ENCODE measurements at regions of chr16 and their contacts with region 1.

Region 1: DNA sequence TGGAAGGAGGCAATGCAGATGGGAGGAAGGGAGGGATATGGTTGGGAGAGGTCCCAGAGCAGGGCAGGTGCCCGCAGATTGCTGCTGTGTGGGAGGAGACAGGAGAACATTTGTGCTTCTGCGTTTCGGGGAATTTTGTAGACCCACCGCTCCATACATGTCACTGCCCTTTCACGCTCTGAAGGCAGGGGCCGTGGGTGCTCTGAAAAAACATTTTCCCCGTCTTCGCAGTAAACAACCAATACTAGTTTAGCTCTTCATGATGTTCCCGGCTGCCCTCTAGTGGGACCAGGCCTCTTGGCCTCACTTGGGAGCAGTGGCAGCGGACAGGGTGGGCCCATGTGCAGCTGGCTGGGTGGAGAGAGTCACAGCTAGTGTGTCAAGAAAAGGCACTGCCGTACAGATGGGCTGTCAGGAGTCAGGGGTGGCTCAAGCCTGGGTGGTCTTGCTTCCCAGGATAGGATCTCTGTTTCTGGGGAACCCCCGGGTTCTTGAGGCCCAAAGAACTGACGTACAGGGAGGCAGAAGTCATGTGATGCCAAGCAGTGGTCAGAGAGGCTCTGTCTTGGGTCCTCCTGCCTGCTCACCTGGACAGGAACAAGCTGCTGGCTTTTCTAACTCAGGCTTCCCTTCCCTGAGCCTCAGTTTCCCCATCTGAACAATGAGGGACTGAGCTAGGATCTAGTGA is 46.5 kb upstream of the CPNE2 start:
- DNase-seq: peak; percentile 57
- ATAC-seq: peak; percentile 25
- H3K4me3 Mint-ChIP-seq: peak overlapping the region; percentile 68
- H3K27ac Mint-ChIP-seq: peak overlapping the region; percentile 92
- H3K4me1 Mint-ChIP-seq: peaks cover 87% of the 10 kb centered on the region
- H3K27me3 Mint-ChIP-seq: no peaks in the 10 kb centered on the region
- CTCF ChIP-seq: no peak

Region 2: GRCh38 chr16:56425439-56425832 is 620.4 kb before region 1 on chr16 and contains the start of gene AMFR:
- CTCF ChIA-PET with region 1: no interaction called
- POLR2A ChIA-PET with region 1: no interaction called
- intact Hi-C with region 1: loop called (anchors 5 kb)
- DNase-seq: peak; percentile 82
- ATAC-seq: peak; percentile 87
- H3K4me3 Mint-ChIP-seq: peak within 1 kb of the TSS; percentile 96
- H3K27ac Mint-ChIP-seq: peak within 1 kb of the TSS; percentile 95
- H3K4me1 Mint-ChIP-seq: peaks cover 44% of the 10 kb centered on the region
- H3K27me3 Mint-ChIP-seq: no peaks in the 10 kb centered on the region
- CTCF ChIP-seq: no peak
- total RNA-seq, gene AMFR: 118 and 134 TPM in 2 replicates

Region 3: GRCh38 chr16:56931892-56932720 is 113.7 kb before region 1 on chr16 and contains the start of gene HERPUD1:
- CTCF ChIA-PET with region 1: no interaction called
- POLR2A ChIA-PET with region 1: interaction called, 18 read pairs
- intact Hi-C with region 1: loop called (anchors 1 kb)
- DNase-seq: peak; percentile 98
- ATAC-seq: peak; percentile 79
- H3K4me3 Mint-ChIP-seq: peak within 1 kb of the TSS; percentile 97
- H3K27ac Mint-ChIP-seq: peak within 1 kb of the TSS; percentile 95
- H3K4me1 Mint-ChIP-seq: peaks cover 61% of the 10 kb centered on the region
- H3K27me3 Mint-ChIP-seq: no peaks in the 10 kb centered on the region
- CTCF ChIP-seq: no peak
- total RNA-seq, gene HERPUD1: 766 and 820 TPM in 2 replicates

Region 4: DNA sequence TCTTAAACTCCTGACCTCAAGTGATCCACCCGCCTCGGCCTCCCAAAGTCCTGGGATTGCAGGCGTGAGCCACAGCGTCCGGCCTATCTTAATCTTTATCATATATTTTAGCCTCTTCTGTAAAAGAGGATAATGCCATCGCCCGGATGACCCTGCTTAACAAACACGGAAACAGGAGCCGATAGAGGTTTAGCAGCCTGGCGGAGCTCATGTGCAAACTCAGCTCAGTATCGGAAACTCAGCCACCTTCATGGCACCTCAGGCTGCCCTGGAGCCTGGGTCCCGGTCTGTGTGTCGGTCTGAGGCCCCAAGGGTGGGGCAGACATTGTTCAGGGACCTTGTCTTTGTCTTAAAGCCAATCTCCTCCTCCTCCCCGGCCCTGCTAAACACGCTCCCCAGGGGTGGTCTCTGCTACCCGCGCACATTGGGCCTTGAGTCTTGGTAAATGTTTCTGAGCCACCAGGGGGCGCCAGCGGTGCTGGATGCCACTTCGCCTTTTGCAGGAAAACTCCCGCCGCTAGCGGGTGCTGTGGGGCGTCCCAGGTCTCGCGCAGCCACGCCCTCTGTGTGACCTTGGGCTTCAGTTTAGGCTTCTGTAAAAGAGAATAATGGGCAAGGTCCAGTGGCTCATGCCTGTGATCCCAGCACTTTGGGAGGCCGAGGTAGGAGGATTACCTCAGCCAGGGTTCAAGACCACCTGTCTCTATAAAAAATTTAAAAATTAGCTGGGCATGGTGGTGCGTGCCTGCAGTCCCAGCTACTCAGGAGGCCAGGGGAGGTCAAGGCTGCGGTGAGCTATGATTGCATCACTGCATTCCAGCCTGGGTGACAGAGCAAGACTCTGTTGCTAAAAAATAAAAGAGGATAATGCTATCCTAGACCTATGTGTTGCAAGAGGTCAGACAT is 81.3 kb before region 1 on chr16:
- CTCF ChIA-PET with region 1: interaction called, 108 read pairs
- POLR2A ChIA-PET with region 1: interaction called, 87 read pairs
- intact Hi-C with region 1: loop called (anchors 1 kb)
- DNase-seq: peak; percentile 93
- ATAC-seq: peak; percentile 94
- H3K4me3 Mint-ChIP-seq: no peak overlapping the region
- H3K27ac Mint-ChIP-seq: peak overlapping the region; percentile 84
- H3K4me1 Mint-ChIP-seq: peaks cover 25% of the 10 kb centered on the region
- H3K27me3 Mint-ChIP-seq: no peaks in the 10 kb centered on the region
- CTCF ChIP-seq: peak; percentile 97

Region 5: DNA sequence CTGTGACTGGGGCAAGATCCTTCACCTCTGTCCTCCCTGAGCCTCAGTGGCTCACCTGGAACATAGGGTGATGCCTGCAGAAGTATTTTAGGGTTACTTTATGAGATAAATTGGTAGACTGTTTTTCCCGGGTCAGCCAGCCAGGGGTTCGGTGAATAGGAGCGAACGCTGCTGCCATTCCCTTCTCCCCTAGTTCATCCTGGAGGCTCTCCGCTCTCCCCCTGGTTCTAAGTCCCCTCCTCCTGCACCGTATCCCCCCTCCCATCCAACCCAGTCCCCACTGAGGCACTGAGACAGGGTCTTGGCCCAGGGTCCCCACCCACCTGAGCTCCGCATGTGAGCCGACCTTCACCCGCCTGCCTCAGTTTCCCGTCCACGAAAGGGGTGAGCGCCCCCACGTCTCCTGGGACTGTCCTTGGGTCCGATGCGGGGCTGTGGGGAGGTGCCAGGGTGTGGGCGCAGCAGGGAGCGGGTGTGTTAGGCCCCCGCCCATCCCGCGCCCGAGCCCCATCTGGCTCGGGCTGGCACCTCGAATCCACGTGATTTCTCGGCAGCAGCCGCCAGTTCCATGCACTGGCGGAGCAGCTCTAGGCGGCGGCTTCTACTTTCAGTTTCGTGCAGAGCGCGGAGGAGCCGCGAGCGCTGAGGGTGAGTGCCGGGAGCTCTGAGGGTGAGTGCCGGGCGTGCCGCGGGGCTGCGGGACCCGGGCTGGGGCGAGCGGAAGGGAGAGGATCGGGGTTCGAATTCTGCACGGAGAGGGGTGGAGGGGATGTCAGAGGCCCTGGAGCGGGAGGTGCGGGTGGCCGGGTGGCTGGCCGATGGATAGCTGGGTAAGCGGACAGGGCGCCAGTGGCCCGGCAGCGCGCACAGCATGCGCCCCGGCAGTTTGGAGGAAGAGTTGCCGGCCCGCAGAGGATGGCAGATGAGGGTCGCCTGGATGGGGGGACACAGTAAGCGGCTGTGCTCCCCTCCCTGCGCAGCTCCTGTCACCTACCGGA is 56.6 kb before region 1 on chr16 and contains the start of gene NLRC5:
- CTCF ChIA-PET with region 1: interaction called, 10 read pairs
- POLR2A ChIA-PET with region 1: interaction called, 73 read pairs
- intact Hi-C with region 1: no loop called
- DNase-seq: peak; percentile 76
- ATAC-seq: peak; percentile 89
- H3K4me3 Mint-ChIP-seq: peak within 1 kb of the TSS; percentile 96
- H3K27ac Mint-ChIP-seq: peak within 1 kb of the TSS; percentile 93
- H3K4me1 Mint-ChIP-seq: peaks cover 86% of the 10 kb centered on the region
- H3K27me3 Mint-ChIP-seq: no peaks in the 10 kb centered on the region
- CTCF ChIP-seq: no peak
- total RNA-seq, gene NLRC5: 296 and 372 TPM in 2 replicates

Region 6: DNA sequence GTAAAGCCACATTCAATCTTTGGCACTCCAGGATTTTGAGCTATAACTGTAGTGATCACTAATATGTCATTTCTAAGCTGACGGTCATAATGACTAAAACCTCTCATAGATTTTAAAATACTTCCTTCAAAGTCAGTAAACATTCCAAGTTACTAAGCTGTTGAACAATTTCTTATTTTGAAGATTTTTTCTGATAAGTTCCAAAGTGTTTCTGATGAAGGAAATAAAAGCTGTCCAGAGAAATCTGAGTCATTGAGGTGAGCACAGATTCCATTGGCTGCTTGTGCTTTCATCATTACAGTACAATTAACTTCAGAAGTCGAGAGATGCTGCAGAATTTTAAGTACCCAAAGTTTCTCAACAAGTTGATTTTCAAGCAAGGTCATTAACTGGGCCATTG is 32.6 kb before region 1 on chr16:
- CTCF ChIA-PET with region 1: interaction called, 5 read pairs
- POLR2A ChIA-PET with region 1: interaction called, 18 read pairs
- intact Hi-C with region 1: loop called (anchors 1 kb)
- DNase-seq: no peak
- ATAC-seq: no peak
- H3K4me3 Mint-ChIP-seq: no peak overlapping the region
- H3K27ac Mint-ChIP-seq: peak overlapping the region; percentile 88
- H3K4me1 Mint-ChIP-seq: peaks cover 58% of the 10 kb centered on the region
- H3K27me3 Mint-ChIP-seq: no peaks in the 10 kb centered on the region
- CTCF ChIP-seq: no peak

Region 7: GRCh38 chr16:57185944-57186871 is 140.4 kb after region 1 on chr16 and contains the starts of genes PSME3IP1 and RSPRY1:
- CTCF ChIA-PET with region 1: no interaction called
- POLR2A ChIA-PET with region 1: interaction called, 12 read pairs
- intact Hi-C with region 1: no loop called
- DNase-seq: peak; percentile 89
- ATAC-seq: peak; percentile 91
- H3K4me3 Mint-ChIP-seq: peak within 1 kb of the TSS; percentile 92
- H3K27ac Mint-ChIP-seq: peak within 1 kb of the TSS; percentile 95
- H3K4me1 Mint-ChIP-seq: peaks cover 57% of the 10 kb centered on the region
- H3K27me3 Mint-ChIP-seq: no peaks in the 10 kb centered on the region
- CTCF ChIP-seq: no peak
- total RNA-seq, gene PSME3IP1: 131 and 147 TPM in 2 replicates
- total RNA-seq, gene RSPRY1: 32.6 and 39.9 TPM in 2 replicates